PC-3 (cell line): ENCODE measurements at regions of chr14 and their contacts with region 1.

Region 1: DNA sequence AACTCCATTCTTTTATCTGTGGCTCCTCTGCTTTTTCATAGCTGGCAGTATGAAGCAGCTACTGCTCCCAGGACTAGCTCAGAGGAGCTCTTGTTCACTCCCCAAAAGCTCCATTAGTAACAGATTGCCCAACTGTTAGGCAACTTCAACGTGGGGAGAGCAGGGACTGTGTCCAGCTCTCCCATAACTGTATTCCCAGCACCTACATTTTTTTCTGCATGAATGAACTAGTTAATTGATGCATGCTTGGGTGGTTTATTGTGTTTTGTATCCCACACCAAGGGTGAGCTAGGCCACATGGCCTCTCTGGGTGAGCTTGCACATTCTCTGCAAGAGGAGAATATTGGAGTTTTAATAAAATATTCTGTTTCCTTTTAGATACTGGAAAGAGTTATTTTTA is 15.2 kb downstream of the STON2 start:
- DNase-seq: peak; percentile 62
- ATAC-seq: peak; percentile 9
- H3K4me3 ChIP-seq: no peak overlapping the region
- H3K27ac ChIP-seq: no peak overlapping the region
- H3K4me1 ChIP-seq: peaks cover 37% of the 10 kb centered on the region
- H3K27me3 ChIP-seq: no peaks in the 10 kb centered on the region
- CTCF ChIP-seq: no peak

Region 2: GRCh38 chr14:81269100-81269978 is 115.6 kb before region 1 on chr14:
- CTCF ChIA-PET with region 1: interaction called, 7 read pairs
- POLR2A ChIA-PET with region 1: interaction called, 3 read pairs
- intact Hi-C with region 1: loop called (anchors 2 kb)
- DNase-seq: peak; percentile 90
- ATAC-seq: peak; percentile 78
- H3K4me3 ChIP-seq: no peak overlapping the region
- H3K27ac ChIP-seq: no peak overlapping the region
- H3K4me1 ChIP-seq: peaks cover 32% of the 10 kb centered on the region
- H3K27me3 ChIP-seq: no peaks in the 10 kb centered on the region
- CTCF ChIP-seq: peak; percentile 90

Region 3: GRCh38 chr14:81303248-81304221 is 81.4 kb before region 1 on chr14:
- CTCF ChIA-PET with region 1: interaction called, 4 read pairs
- POLR2A ChIA-PET with region 1: no interaction called
- intact Hi-C with region 1: loop called (anchors 2 kb)
- DNase-seq: peak; percentile 97
- ATAC-seq: peak; percentile 98
- H3K4me3 ChIP-seq: no peak overlapping the region
- H3K27ac ChIP-seq: peak overlapping the region; percentile 69
- H3K4me1 ChIP-seq: peaks cover 22% of the 10 kb centered on the region
- H3K27me3 ChIP-seq: no peaks in the 10 kb centered on the region
- CTCF ChIP-seq: no peak

Region 4: GRCh38 chr14:81324018-81324417 is 60.9 kb before region 1 on chr14:
- CTCF ChIA-PET with region 1: no interaction called
- POLR2A ChIA-PET with region 1: no interaction called
- intact Hi-C with region 1: loop called (anchors 5 kb)
- DNase-seq: peak; percentile 84
- ATAC-seq: peak; percentile 99
- H3K4me3 ChIP-seq: peak overlapping the region; percentile 76
- H3K27ac ChIP-seq: peak overlapping the region; percentile 47
- H3K4me1 ChIP-seq: peaks cover 27% of the 10 kb centered on the region
- H3K27me3 ChIP-seq: no peaks in the 10 kb centered on the region
- CTCF ChIP-seq: no peak

Region 5: DNA sequence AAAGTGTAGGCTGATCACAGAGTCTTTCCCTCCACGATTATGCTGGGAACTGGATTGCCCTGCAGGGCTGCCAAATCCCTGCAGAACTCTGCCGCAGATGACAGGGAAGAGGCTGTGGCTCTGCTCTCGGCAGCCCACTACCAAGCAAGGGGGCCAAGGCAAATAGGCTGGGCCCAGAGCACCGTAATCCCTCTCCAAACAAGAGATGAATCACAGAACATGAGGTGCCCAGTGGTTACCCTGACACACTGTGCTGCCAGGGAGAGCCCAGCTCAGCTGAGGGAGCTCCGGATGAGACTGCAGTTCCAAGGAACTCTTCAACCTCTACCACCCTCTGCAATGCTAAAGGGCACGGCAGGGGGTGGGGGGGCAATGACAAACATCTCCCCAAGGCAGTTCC is 18.7 kb before region 1 on chr14:
- CTCF ChIA-PET with region 1: no interaction called
- POLR2A ChIA-PET with region 1: no interaction called
- intact Hi-C with region 1: loop called (anchors 2 kb)
- DNase-seq: peak; percentile 72
- ATAC-seq: peak; percentile 99
- H3K4me3 ChIP-seq: no peak overlapping the region
- H3K27ac ChIP-seq: peak overlapping the region; percentile 44
- H3K4me1 ChIP-seq: peaks cover 13% of the 10 kb centered on the region
- H3K27me3 ChIP-seq: no peaks in the 10 kb centered on the region
- CTCF ChIP-seq: no peak

Region 6: GRCh38 chr14:81436296-81437138 is 51.6 kb after region 1 on chr14:
- CTCF ChIA-PET with region 1: no interaction called
- POLR2A ChIA-PET with region 1: no interaction called
- intact Hi-C with region 1: loop called (anchors 1 kb)
- DNase-seq: peak; percentile 87
- ATAC-seq: peak; percentile 93
- H3K4me3 ChIP-seq: peak overlapping the region; percentile 72
- H3K27ac ChIP-seq: no peak overlapping the region
- H3K4me1 ChIP-seq: peaks cover 13% of the 10 kb centered on the region
- H3K27me3 ChIP-seq: peaks cover 18% of the 10 kb centered on the region; the same call in 1 of the 2 replicates
- CTCF ChIP-seq: no peak